Gastrocnemius medialis (tissue), 4 donors: ENCODE measurements at regions of chr2 and their contacts with region 1.

Region 1: DNA sequence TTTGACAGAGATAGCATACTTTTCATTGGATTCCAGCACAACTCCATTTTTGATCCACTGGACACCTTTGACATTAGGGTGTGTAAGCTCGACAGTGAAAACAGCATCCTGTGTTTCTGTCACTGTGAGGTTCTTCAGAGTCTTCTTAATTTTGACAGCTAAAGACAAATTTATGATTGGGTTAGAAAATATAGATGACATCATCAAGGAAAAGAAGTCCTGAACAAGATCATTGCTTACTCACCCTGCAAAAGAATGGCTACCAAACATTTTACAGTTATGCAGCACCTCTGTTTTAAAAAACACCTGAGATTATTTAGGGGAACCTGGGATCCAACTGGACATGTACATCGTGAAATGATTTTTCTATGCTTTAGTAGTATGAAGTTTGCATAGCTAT is 36.7 kb downstream of the TTN start:
- DNase-seq: no peak
- ATAC-seq: no peak
- H3K4me3 ChIP-seq: no peak overlapping the region
- H3K27ac ChIP-seq: peak overlapping the region in 1 of 4 donors; percentile 43
- H3K4me1 ChIP-seq: peaks cover 73 to 92% of the 10 kb centered on the region in 2 donors
- H3K27me3 ChIP-seq: no peaks in the 10 kb centered on the region
- CTCF ChIP-seq: no peak
- POLR2A ChIP-seq: no peak

Region 2: GRCh38 chr2:178692845-178693244 is 77.7 kb before region 1 on chr2:
- in situ Hi-C with region 1: loop called in 1 of 4 experiments (anchors 25 kb)
- intact Hi-C with region 1: loop called (anchors 5 kb)
- DNase-seq: no peak
- ATAC-seq: no peak
- H3K4me3 ChIP-seq: no peak overlapping the region
- H3K27ac ChIP-seq: no peak overlapping the region
- H3K4me1 ChIP-seq: peaks cover 29 to 46% of the 10 kb centered on the region in 2 donors
- H3K27me3 ChIP-seq: no peaks in the 10 kb centered on the region
- CTCF ChIP-seq: no peak
- POLR2A ChIP-seq: no peak

Region 3: GRCh38 chr2:178731300-178731699 is 39.2 kb before region 1 on chr2:
- in situ Hi-C with region 1: no loop called
- intact Hi-C with region 1: loop called (anchors 5 kb)
- DNase-seq: peak in 1 of 2 donors; percentile 64
- ATAC-seq: peak; percentile 37 to 51
- H3K4me3 ChIP-seq: no peak overlapping the region
- H3K27ac ChIP-seq: peak overlapping the region; percentile 61 to 79 (median 70)
- H3K4me1 ChIP-seq: peaks cover 69 to 77% of the 10 kb centered on the region in 2 donors
- H3K27me3 ChIP-seq: no peaks in the 10 kb centered on the region
- CTCF ChIP-seq: no peak
- POLR2A ChIP-seq: no peak

Region 4: DNA sequence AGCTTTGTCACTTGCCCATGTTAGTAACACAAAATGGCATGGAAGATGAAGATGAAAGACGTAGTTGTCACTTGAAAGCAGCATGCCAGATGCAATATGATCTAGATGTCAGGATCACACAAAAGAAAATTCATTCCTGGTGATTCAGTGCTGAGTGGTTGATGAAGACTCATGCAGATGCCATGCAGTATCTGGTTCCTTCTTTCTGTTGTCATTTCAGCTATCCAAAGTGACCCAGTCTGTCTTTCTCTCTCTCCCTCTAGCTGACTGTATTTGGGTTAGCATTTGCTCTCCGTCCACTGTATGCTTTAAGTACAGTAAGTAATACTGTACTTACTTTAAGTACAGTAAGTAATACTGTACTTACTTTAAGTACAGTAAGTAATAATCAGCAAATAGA is 13.7 kb before region 1 on chr2:
- in situ Hi-C with region 1: no loop called
- intact Hi-C with region 1: no loop called
- DNase-seq: no peak
- ATAC-seq: peak; percentile 70 to 75
- H3K4me3 ChIP-seq: no peak overlapping the region
- H3K27ac ChIP-seq: no peak overlapping the region
- H3K4me1 ChIP-seq: peaks cover 55% of the 10 kb centered on the region in 2 donors
- H3K27me3 ChIP-seq: no peaks in the 10 kb centered on the region
- CTCF ChIP-seq: no peak
- POLR2A ChIP-seq: no peak

Region 5: DNA sequence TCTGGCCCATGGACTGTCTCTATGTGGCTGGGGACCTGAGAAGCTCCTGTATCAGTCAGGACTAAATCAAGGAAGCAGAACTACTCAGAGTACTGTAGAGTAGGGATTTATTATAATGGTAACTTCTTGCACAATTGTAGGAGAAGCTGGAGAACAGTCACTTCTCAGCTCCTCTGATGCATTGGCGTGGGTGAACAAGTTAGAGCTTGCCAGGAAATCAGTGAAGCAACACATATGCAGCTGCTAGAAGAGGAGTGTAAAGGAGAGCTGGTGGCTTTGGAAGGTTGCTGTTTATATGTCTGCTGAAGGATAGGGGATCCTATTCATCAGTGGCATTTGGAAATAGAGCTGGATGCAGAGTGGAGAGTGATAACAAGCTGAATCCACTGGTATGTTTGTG is 1452.1 kb after region 1 on chr2:
- in situ Hi-C with region 1: no loop called
- intact Hi-C with region 1: no loop called
- DNase-seq: peak in 1 of 2 donors; percentile 21
- ATAC-seq: peak; percentile 52 to 53
- H3K4me3 ChIP-seq: no peak overlapping the region
- H3K27ac ChIP-seq: no peak overlapping the region
- H3K4me1 ChIP-seq: no peaks in the 10 kb centered on the region
- H3K27me3 ChIP-seq: no peaks in the 10 kb centered on the region
- CTCF ChIP-seq: no peak
- POLR2A ChIP-seq: no peak